ENCODE measurements at regions of chrX and their contacts with region 1.

Region 1: GRCh38 chrX:34918856-34919255 is 23.7 kb upstream of the FAM47B start:
- DNase-seq: no peak
- CTCF ChIP-seq: no peak

Region 2: DNA sequence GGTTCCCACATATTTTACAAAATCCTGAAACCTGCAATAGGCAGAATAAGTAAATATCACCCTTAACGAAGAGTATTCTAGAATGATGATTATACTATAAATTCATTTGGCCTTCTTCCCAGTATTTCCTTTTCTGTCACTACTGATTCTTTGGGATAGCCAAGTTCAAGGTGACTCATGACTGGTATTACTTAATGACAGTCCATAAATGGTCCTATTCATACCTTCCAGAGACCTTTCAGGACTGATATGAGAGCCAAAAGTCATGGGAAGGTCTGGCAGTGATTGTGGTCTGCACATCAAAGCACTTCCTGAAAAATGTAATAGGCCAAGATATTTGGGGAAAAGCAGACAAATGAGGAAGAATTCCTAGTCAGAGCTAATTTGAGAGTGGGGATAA is 547.1 kb before region 1 on chrX:
- in situ Hi-C with region 1: no loop called
- DNase-seq: no peak
- CTCF ChIP-seq: no peak

Region 3: DNA sequence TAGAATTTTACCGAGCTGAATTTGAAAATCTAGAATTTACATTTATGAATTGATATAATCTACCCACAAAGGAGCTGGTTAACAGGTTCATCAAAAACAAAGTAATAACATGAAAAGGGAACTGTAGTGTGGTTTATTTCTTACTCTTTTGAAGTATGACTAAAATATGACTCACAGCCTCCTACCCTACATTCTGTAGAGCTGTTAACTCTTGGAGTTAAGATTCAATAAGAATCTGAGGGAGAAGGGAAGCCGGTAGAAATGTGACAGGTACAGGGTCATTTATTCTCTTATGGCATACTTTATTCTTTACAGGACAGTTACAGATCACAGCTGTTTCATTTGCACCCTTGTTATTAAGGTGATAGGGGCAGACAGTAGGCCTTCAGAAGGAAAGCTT is 108.5 kb before region 1 on chrX:
- in situ Hi-C with region 1: loop called (anchors 25 kb)
- DNase-seq: no peak
- CTCF ChIP-seq: no peak

Region 4: DNA sequence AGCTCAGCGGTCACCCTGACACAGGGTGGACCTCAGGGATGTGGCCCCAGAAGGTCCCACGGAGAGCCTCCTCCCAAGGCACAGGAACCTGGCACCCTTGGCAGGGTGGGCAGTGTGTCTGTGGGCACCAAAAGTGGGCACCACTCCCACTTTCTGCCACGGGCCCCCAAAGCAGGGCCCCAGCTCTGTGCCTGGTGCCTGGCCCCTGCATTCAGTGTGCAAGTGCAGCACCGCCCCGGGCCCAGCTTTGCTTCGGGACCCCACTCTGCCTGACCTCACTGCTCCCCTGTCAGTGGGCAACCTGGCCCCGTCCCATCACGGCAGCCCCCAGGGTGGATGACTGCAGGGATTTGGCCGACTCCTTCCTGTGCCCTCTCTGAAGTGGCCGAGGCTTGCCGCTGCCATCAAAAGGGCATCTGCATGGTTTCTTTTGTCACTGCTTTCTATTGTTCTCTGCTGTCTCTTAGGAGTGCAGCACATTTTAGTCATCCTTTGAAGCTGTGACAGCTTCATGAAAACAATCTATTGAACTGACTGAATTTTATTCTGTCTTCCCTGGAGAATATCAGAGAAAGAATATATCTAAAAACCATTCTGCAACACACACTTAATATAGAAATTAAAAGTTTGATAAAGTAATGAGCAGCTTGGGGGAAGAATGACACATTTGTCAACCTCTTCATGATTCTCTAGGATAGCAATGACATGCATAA is 326.1 kb after region 1 on chrX:
- in situ Hi-C with region 1: no loop called
- DNase-seq: no peak
- CTCF ChIP-seq: no peak